GM12878 (cell line): ENCODE measurements at regions of chr6 and their contacts with region 1.

Region 1: GRCh38 chr6:144215932-144216667 is 65.8 kb downstream of the STX11 start:
- DNase-seq: peak; percentile 96
- ATAC-seq: peak; percentile 95
- H3K4me3 ChIP-seq: peak overlapping the region; percentile 68
- H3K27ac ChIP-seq: peak overlapping the region; percentile 88
- H3K4me1 ChIP-seq: peaks cover 9% of the 10 kb centered on the region
- H3K27me3 ChIP-seq: no peaks in the 10 kb centered on the region
- CTCF ChIP-seq: peak; percentile 60 to 79 (median 69)
- EP300 ChIP-seq: peak in 1 of 2 experiments; percentile 91; a peak in 1 of 4 replicates
- POLR2A ChIP-seq: peak; percentile 79
- RAD21 ChIP-seq: peak; percentile 51

Region 2: GRCh38 chr6:143940011-143940597 is 276.0 kb before region 1 on chr6:
- CTCF ChIA-PET with region 1: interaction called, 21 read pairs
- POLR2A ChIA-PET with region 1: no interaction called
- RAD21 ChIA-PET with region 1: interaction called, 13 read pairs
- SMC1A ChIA-PET with region 1: interaction called, 5 read pairs
- in situ Hi-C with region 1: loop called (anchors 10 kb)
- intact Hi-C with region 1: loop called (anchors 2 kb)
- DNase-seq: peak; percentile 30
- ATAC-seq: peak; percentile 99
- H3K4me3 ChIP-seq: no peak overlapping the region
- H3K27ac ChIP-seq: no peak overlapping the region
- H3K4me1 ChIP-seq: peaks cover 5% of the 10 kb centered on the region; the same call in 1 of the 2 replicates
- H3K27me3 ChIP-seq: no peaks in the 10 kb centered on the region
- CTCF ChIP-seq: peak; percentile 77 to 85 (median 80)
- EP300 ChIP-seq: no peak
- POLR2A ChIP-seq: no peak
- RAD21 ChIP-seq: peak; percentile 59

Region 3: DNA sequence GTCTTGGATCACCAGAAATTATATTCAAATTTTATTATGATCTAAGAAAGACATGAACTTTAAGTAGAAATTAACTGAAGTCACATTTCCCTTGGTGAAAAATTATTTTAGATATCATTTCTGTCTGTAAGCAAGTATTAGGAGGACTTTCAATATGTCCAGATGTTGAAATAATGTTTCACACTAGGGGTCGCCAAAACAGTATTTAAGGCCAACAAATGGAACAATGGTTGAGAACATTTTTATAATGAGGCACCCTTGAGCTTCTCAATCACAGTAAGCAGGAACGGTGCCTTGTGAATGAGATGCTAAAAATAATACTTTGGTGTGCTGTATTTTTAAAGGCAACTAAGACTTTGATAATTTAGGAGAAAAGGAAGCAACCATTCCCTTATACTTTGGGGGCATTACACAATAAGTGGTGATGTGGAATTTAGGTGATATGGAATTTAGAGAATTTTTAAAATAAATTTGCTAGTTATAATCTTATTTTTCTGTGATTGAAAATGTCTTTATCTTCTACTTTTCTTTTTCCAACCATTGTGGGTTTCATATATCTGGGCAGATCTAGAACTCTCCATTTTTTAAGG is 111.1 kb before region 1 on chr6:
- CTCF ChIA-PET with region 1: interaction called, 142 read pairs
- POLR2A ChIA-PET with region 1: no interaction called
- RAD21 ChIA-PET with region 1: interaction called, 87 read pairs
- SMC1A ChIA-PET with region 1: interaction called, 125 read pairs
- in situ Hi-C with region 1: no loop called
- intact Hi-C with region 1: loop called (anchors 1 kb)
- DNase-seq: peak; percentile 53
- ATAC-seq: peak; percentile 97
- H3K4me3 ChIP-seq: no peak overlapping the region
- H3K27ac ChIP-seq: no peak overlapping the region
- H3K4me1 ChIP-seq: no peaks in the 10 kb centered on the region
- H3K27me3 ChIP-seq: no peaks in the 10 kb centered on the region
- CTCF ChIP-seq: peak; percentile 59 to 89 (median 72)
- EP300 ChIP-seq: no peak
- POLR2A ChIP-seq: no peak
- RAD21 ChIP-seq: peak; percentile 99

Region 4: GRCh38 chr6:144123836-144124235 is 92.3 kb before region 1 on chr6:
- CTCF ChIA-PET with region 1: interaction called, 14 read pairs
- POLR2A ChIA-PET with region 1: interaction called, 4 read pairs
- RAD21 ChIA-PET with region 1: interaction called, 4 read pairs
- SMC1A ChIA-PET with region 1: interaction called, 8 read pairs
- in situ Hi-C with region 1: no loop called
- intact Hi-C with region 1: no loop called
- DNase-seq: no peak
- ATAC-seq: no peak
- H3K4me3 ChIP-seq: no peak overlapping the region
- H3K27ac ChIP-seq: no peak overlapping the region
- H3K4me1 ChIP-seq: no peaks in the 10 kb centered on the region
- H3K27me3 ChIP-seq: no peaks in the 10 kb centered on the region
- CTCF ChIP-seq: no peak
- EP300 ChIP-seq: no peak
- POLR2A ChIP-seq: no peak
- RAD21 ChIP-seq: no peak

Region 5: DNA sequence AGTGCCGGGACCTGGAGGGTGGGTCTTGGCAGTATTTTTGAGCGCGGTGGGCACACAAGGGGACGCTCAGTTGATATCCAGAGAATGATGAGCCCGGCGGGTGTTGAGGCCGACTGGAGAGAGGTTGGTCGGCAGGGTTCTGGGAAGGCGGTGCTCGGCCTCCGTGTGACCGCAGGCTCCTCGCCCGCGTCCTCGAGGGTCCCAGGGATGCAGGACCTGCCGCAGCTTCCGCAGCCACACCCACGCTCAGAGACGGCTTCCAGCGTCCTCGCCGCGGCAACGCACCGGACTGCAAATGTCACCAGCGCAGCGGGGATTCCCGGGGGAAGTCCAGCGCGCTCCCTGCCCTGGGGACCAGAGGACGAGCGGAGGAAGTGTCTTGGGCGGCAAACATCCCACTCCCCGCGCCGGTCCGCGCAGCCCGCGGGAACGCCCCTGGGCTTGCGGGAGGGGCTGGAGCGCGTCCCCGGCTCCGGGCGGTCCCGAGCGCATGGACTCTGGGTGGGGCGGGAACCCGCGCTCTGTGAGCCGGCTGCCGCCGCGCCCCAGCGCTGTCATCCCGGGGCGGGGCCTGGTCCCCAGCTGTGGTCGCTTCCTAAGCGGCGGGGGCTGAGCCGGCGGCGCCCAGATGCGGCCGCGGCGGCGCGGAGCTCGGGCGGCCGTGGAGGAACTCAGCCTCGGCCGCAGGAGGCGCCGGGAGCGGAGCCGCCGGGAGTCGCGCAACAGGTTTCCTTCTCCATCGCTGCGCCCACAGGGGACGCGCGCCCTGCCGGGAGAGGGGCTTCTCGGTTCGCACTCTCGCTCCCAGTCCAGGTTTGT is 66.0 kb before region 1 on chr6 and contains the start of gene STX11:
- CTCF ChIA-PET with region 1: interaction called, 12 read pairs
- POLR2A ChIA-PET with region 1: interaction called, 3 read pairs
- RAD21 ChIA-PET with region 1: interaction called, 17 read pairs
- SMC1A ChIA-PET with region 1: interaction called, 21 read pairs
- in situ Hi-C with region 1: loop called (anchors 5 kb)
- intact Hi-C with region 1: loop called (anchors 1 kb)
- DNase-seq: peak; percentile 57
- ATAC-seq: peak; percentile 80
- H3K4me3 ChIP-seq: peak within 1 kb of the TSS; percentile 74
- H3K27ac ChIP-seq: peak within 1 kb of the TSS; percentile 98
- H3K4me1 ChIP-seq: peaks cover 18% of the 10 kb centered on the region
- H3K27me3 ChIP-seq: no peaks in the 10 kb centered on the region
- CTCF ChIP-seq: no peak
- EP300 ChIP-seq: peak in 1 of 2 experiments; percentile 55; a peak in 2 of 4 replicates
- POLR2A ChIP-seq: peak; percentile 91
- RAD21 ChIP-seq: no peak
- polyA plus RNA-seq, gene STX11: 0.66 to 2.3 TPM

Region 6: GRCh38 chr6:144181639-144182038 is 34.5 kb before region 1 on chr6:
- CTCF ChIA-PET with region 1: interaction called, 3 read pairs
- POLR2A ChIA-PET with region 1: no interaction called
- RAD21 ChIA-PET with region 1: interaction called, 4 read pairs
- SMC1A ChIA-PET with region 1: interaction called, 12 read pairs
- in situ Hi-C with region 1: no loop called
- intact Hi-C with region 1: no loop called
- DNase-seq: no peak
- ATAC-seq: no peak
- H3K4me3 ChIP-seq: no peak overlapping the region
- H3K27ac ChIP-seq: no peak overlapping the region
- H3K4me1 ChIP-seq: peaks cover 22% of the 10 kb centered on the region
- H3K27me3 ChIP-seq: no peaks in the 10 kb centered on the region
- CTCF ChIP-seq: no peak
- EP300 ChIP-seq: no peak
- POLR2A ChIP-seq: no peak
- RAD21 ChIP-seq: no peak

Region 7: GRCh38 chr6:144482142-144482541 is 266.0 kb after region 1 on chr6:
- CTCF ChIA-PET with region 1: interaction called, 28 read pairs
- POLR2A ChIA-PET with region 1: no interaction called
- RAD21 ChIA-PET with region 1: interaction called, 20 read pairs
- SMC1A ChIA-PET with region 1: interaction called, 12 read pairs
- in situ Hi-C with region 1: no loop called
- intact Hi-C with region 1: loop called (anchors 2 kb)
- DNase-seq: peak; percentile 20
- ATAC-seq: peak; percentile 92
- H3K4me3 ChIP-seq: no peak overlapping the region
- H3K27ac ChIP-seq: no peak overlapping the region
- H3K4me1 ChIP-seq: no peaks in the 10 kb centered on the region
- H3K27me3 ChIP-seq: no peaks in the 10 kb centered on the region
- CTCF ChIP-seq: peak; percentile 63 to 79 (median 73); a peak in 5 of 6 replicates
- EP300 ChIP-seq: no peak
- POLR2A ChIP-seq: no peak
- RAD21 ChIP-seq: peak; percentile 73